Activated CD4-positive, alpha-beta T cell treated with anti-CD3 and anti-CD28 coated beads, Interleukin-2, amount 10 ng/mL, durations not matched to agents 24 days and 14 days (primary cell): ENCODE measurements at regions of chr7 and their contacts with region 1.

Region 1: GRCh38 chr7:155003376-155004214 is 671 bp upstream of the PAXIP1 start:
- DNase-seq: peak; percentile 94
- H3K4me3 Mint-ChIP-seq: peak overlapping the region; percentile 94
- H3K27ac Mint-ChIP-seq: peak overlapping the region; percentile 94
- H3K4me1 Mint-ChIP-seq: peaks cover 9% of the 10 kb centered on the region
- H3K27me3 Mint-ChIP-seq: no peaks in the 10 kb centered on the region

Region 2: DNA sequence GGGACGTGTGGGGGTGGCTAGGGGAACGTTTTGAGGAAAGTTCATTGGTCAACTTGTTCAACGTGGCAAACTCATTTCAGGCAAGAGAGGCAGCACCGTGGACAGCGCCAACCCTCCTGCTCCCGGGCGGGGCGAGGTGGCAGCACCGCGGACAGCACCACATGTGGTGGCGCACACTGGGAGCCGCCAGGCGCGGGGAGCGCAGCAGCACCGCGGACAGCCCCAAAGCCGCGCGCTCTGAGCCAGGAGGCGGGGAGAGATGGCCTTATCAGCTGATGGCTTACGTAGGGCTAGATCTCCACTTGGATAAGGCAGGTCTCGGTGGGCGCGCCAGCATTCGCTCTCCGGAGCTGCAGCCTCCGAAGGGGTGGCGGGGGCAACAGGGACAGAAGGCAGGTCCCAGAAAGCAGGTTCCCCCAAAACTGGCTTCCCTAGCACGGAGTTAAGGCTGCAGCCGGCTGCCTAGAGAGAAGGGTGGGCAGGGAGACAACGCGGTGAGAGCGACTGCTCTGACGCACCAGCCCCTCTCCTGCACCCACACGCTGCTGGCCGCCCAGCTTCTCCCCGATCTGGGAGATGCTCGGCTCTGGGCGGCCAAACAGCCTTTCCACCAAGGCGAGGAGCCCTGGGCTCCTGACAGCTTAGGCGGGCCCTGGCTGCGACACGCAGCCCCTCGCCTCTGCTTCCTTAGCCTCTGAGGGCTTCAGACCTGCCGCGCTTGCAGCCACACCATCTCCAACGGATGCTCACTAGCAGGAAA is 66.6 kb after region 1 on chr7 and contains the start of gene HTR5A:
- intact Hi-C with region 1: loop called (anchors 5 kb)
- DNase-seq: peak; percentile 96
- H3K4me3 Mint-ChIP-seq: no peak within 1 kb of the TSS
- H3K27ac Mint-ChIP-seq: no peak within 1 kb of the TSS
- H3K4me1 Mint-ChIP-seq: no peaks in the 10 kb centered on the region
- H3K27me3 Mint-ChIP-seq: peaks cover 20% of the 10 kb centered on the region
- total RNA-seq, gene HTR5A: not detected in 2 replicates

Region 3: DNA sequence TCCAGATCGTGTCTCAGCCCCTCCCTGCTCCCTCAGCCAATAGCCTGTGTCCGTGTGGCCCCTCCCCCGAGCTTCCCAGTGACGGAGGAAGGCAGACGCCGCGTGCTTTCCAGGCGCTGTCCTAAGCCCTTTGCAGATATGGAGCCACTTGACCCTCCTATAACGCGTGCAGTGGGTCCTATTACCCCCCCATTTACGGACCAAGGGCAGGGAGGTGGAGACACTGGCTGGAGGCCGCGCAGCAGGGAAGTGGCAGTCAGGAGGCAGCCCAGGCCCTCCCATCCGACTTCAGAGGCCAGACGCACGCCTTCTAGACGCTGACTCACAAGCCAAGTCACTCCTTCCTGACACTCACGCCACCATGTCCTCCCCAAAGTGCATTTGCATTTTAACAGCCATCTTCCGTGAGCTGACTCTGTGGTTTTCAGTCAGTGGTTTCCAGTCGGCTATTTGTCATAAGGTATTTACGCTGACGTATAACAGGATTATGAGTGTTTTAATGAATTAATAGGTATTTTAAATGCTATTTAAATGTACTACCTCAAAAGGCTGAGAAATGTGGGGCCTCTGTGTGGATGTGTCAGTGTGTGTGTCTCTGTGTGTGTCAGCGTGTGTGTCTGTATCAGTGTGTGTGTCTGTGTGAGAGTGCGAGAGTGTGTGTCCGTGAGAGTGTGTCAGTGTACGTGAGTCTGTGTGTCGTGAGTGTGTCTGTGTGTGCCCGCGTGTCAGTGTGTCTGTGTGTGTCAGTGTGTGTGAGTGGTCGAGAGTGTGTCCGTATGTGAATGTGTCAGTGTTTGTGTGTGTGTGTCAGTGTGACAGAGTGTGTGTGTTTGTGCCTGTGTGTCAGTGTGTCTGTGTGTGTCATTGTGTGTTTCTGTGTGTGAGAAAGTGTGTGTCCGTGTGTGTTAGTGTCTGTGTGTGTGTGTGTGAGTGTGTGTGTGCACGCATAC is 202.0 kb after region 1 on chr7:
- intact Hi-C with region 1: loop called (anchors 2 kb)
- DNase-seq: peak; percentile 96
- H3K4me3 Mint-ChIP-seq: peak overlapping the region; percentile 85
- H3K27ac Mint-ChIP-seq: peak overlapping the region; percentile 96
- H3K4me1 Mint-ChIP-seq: peaks cover 34% of the 10 kb centered on the region
- H3K27me3 Mint-ChIP-seq: no peaks in the 10 kb centered on the region